ENCODE measurements at regions of chr3 and their contacts with region 1.

Region 1: GRCh38 chr3:58305882-58306711 is at the starts of genes HTD2 and RPP14:
- DNase-seq: peak; percentile 90
- ATAC-seq: peak; percentile 94
- H3K4me3 ChIP-seq: peak within 1 kb of the TSS; percentile 74
- H3K27ac ChIP-seq: peak within 1 kb of the TSS; percentile 94
- H3K4me1 ChIP-seq: 0 out of 2 replicates have a peak, but pooled peaks cover 2% of the 10 kb centered on the region
- H3K27me3 ChIP-seq: no peaks in the 10 kb centered on the region
- CTCF ChIP-seq: peak; percentile 93 to 98 (median 96); a peak in 5 of 6 replicates
- EP300 ChIP-seq: peak in 1 of 2 experiments; percentile 43; a peak in 1 of 4 replicates
- POLR2A ChIP-seq: peak; percentile 84
- RAD21 ChIP-seq: peak; percentile 45; the same call in 1 of the 2 replicates
- polyA plus RNA-seq, gene HTD2: 13.5 to 15.9 TPM
- polyA plus RNA-seq, gene RPP14: 9.1 to 16.3 TPM

Region 2: GRCh38 chr3:58188173-58188564 is 117.9 kb before region 1 on chr3:
- CTCF ChIA-PET with region 1: interaction called, 503 read pairs
- POLR2A ChIA-PET with region 1: interaction called, 5 read pairs
- RAD21 ChIA-PET with region 1: interaction called, 106 read pairs
- SMC1A ChIA-PET with region 1: interaction called, 127 read pairs
- in situ Hi-C with region 1: loop called (anchors 5 kb)
- intact Hi-C with region 1: no loop called
- DNase-seq: no peak
- ATAC-seq: peak; percentile 35
- H3K4me3 ChIP-seq: no peak overlapping the region
- H3K27ac ChIP-seq: no peak overlapping the region
- H3K4me1 ChIP-seq: peaks cover 3% of the 10 kb centered on the region; the same call in 1 of the 2 replicates
- H3K27me3 ChIP-seq: no peaks in the 10 kb centered on the region
- CTCF ChIP-seq: no peak
- EP300 ChIP-seq: no peak
- POLR2A ChIP-seq: no peak
- RAD21 ChIP-seq: no peak

Region 3: DNA sequence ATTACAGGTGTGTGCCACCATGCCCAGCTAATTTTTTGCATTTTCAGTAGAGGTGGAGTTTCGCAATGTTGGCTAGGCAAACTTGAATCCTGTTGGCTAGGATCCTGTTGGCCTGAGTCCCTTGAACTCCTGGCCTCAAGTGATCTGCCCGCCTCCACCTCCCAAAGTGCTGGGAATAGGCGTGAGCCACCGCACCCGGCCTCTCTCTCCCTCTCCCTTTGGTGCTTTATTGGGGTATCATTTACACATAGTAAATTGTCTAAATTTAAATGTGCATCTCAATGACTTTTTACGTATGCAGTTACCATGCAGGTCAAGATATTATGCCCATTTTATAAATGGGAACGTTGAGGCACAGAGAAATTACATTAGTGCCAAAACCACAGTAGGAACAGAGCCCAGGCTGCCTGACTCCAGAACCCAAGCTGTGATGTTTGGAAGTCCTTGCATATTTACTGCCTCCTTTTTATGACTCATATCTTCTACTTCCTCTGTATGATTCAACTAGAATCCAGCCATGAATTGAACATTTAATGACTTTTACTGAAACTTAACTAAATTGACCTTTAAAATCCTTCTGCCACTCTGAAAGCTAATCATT is 34.1 kb before region 1 on chr3:
- CTCF ChIA-PET with region 1: interaction called, 13 read pairs
- POLR2A ChIA-PET with region 1: interaction called, 3 read pairs
- RAD21 ChIA-PET with region 1: no interaction called
- SMC1A ChIA-PET with region 1: no interaction called
- in situ Hi-C with region 1: no loop called
- intact Hi-C with region 1: no loop called
- DNase-seq: no peak
- ATAC-seq: no peak
- H3K4me3 ChIP-seq: no peak overlapping the region
- H3K27ac ChIP-seq: no peak overlapping the region
- H3K4me1 ChIP-seq: no peaks in the 10 kb centered on the region
- H3K27me3 ChIP-seq: no peaks in the 10 kb centered on the region
- CTCF ChIP-seq: no peak
- EP300 ChIP-seq: no peak
- POLR2A ChIP-seq: no peak
- RAD21 ChIP-seq: no peak

Region 4: DNA sequence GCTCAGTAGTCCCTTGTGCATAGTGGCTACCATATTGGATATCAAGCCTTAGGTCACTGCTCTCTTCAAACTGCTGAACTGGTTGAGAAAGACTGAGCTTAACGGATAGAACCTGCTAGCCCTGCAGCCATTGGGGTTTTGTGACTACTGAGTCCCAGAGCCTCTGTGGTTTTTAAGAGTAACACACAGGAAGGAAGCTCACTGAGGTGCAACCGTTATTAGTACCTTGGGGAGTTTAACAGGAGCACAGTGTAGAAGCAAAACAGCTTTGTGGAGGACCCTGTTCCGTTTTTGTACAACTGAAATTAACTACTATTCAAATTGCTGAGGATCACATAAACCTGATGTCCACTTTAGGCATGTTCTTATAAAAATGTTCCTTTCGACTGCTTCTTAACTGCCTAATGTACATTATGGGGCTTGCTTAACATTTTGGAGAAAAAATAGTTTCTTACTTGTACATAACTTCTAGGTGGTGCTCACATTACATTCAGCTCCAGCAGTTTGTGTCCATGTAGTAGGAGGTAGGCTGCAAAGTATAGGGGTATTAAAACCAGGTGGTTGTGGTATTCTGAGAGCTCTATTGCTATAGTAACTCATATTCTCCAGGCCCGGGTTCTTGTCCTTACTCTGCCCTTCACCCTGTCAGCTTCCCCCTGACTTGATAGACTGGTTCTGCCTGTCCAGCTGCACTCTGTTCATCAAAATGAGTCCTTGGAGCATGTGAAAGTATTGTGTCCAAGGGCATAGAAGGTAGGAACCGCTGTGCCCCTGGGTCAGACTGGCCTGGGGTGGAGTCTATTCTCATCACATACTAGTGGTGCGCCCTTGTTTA is 43.9 kb after region 1 on chr3:
- CTCF ChIA-PET with region 1: interaction called, 9 read pairs
- POLR2A ChIA-PET with region 1: interaction called, 3 read pairs
- RAD21 ChIA-PET with region 1: interaction called, 15 read pairs
- SMC1A ChIA-PET with region 1: interaction called, 17 read pairs
- in situ Hi-C with region 1: no loop called
- intact Hi-C with region 1: no loop called
- DNase-seq: peak; percentile 87
- ATAC-seq: peak; percentile 88
- H3K4me3 ChIP-seq: peak overlapping the region; percentile 9; the same call in 1 of the 2 replicates
- H3K27ac ChIP-seq: peak overlapping the region; percentile 85
- H3K4me1 ChIP-seq: peaks cover 55% of the 10 kb centered on the region
- H3K27me3 ChIP-seq: no peaks in the 10 kb centered on the region
- CTCF ChIP-seq: no peak
- EP300 ChIP-seq: 0 out of 4 replicates have a peak, but pooled peaks of 1 of the 2 experiments have one; percentile 18
- POLR2A ChIP-seq: peak; percentile 60
- RAD21 ChIP-seq: no peak

Region 5: DNA sequence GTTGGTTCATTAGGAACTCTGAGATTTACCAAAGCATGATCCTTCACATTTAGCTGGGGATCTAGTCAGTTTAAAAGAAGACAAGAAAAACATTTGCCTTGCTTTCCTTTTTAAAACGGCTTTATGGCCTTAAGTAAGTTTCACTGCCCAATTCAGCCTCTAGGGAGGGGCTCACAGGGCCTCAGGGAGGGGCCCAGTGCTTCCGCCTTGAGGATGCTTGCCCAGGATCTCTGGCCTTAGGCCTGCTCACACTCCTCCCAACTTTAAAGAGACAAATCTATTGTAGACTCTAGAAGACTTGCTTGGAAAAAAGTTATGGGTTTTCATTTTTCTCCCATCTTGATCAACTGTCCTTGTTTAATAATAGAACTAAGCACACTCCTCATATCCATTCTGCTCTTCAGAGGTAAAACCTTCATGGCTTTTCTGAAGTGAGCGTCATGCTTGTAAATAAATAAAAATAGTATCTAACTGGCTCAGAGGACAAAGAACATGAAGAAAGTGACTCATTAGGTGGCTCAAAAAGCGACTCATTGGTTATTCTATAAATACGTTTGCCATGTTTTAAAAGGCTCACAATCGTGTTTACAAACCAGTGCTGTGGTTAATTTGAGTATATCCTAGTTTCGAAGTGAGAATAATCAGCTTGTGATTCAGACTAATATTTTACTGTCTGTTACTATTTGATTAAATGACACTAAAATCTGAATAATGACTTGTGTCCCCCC is 113.8 kb after region 1 on chr3:
- CTCF ChIA-PET with region 1: interaction called, 47 read pairs
- POLR2A ChIA-PET with region 1: interaction called, 3 read pairs
- RAD21 ChIA-PET with region 1: interaction called, 16 read pairs
- SMC1A ChIA-PET with region 1: interaction called, 20 read pairs
- in situ Hi-C with region 1: no loop called
- intact Hi-C with region 1: no loop called
- DNase-seq: peak; percentile 32
- ATAC-seq: peak; percentile 87
- H3K4me3 ChIP-seq: no peak overlapping the region
- H3K27ac ChIP-seq: peak overlapping the region; percentile 64
- H3K4me1 ChIP-seq: peaks cover 24% of the 10 kb centered on the region
- H3K27me3 ChIP-seq: no peaks in the 10 kb centered on the region
- CTCF ChIP-seq: no peak
- EP300 ChIP-seq: peak in 1 of 2 experiments; percentile 45; a peak in 1 of 4 replicates
- POLR2A ChIP-seq: no peak
- RAD21 ChIP-seq: no peak

Region 6: DNA sequence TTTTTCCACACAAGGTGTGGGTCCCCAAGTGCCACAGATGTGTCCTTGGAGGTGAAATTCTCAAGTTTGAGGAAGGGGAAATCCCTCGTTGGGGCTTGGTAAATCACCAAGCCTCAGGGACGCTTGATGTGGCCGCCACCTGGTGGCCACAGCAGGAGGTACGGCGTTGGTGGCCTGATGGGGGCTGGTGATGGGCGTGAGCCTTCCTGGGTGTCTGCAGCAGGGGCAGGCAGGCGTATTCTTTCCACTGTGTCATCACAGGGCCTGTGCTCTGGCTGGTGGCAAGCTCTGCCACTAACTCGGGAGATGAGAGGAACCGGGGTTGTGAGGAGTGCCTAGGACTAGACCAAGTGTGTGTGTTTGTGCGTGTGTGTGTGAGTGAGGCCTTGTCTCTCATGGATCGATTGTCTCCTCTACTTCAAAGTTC is 226.7 kb after region 1 on chr3:
- CTCF ChIA-PET with region 1: interaction called, 34 read pairs
- POLR2A ChIA-PET with region 1: no interaction called
- RAD21 ChIA-PET with region 1: interaction called, 7 read pairs
- SMC1A ChIA-PET with region 1: interaction called, 20 read pairs
- in situ Hi-C with region 1: no loop called
- intact Hi-C with region 1: loop called (anchors 1 kb)
- DNase-seq: peak; percentile 11
- ATAC-seq: peak; percentile 99
- H3K4me3 ChIP-seq: no peak overlapping the region
- H3K27ac ChIP-seq: no peak overlapping the region
- H3K4me1 ChIP-seq: no peaks in the 10 kb centered on the region
- H3K27me3 ChIP-seq: no peaks in the 10 kb centered on the region; a peak in 1 of 4 replicates
- CTCF ChIP-seq: peak; percentile 94 to 96 (median 94)
- EP300 ChIP-seq: no peak
- POLR2A ChIP-seq: no peak
- RAD21 ChIP-seq: peak; percentile 96

Measured in GM12878 (cell line).